Posterior vena cava (tissue), 2 donors: ENCODE measurements at regions of chr14 and their contacts with region 1.

Region 1: DNA sequence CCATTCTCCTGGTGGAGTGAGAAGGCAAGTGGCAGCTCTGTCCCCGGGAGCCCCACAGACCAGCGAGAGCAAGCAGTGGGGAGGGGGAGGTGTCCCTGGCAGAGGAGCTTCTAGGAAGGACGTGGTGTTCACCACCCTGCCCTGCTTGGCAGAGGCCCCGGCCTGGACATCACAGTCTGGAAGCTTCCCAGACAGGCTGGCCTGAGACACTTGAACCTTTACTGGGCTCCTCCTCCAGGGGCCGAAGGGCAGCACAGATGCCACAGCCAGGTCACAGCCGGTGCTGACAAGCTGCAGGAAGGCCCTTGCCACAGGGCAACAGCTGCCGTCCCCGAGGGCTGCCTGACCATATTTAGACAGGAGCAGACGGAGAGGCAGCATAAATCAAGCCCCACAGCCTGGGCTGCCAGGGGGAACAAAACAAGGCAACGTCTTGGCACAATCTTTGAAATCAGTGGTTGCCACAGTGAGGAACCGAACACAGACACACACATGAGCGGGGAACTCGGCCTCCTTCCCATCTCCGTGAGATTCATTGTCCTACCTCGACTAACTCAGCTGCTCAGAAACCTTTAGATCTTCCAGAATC is 28.5 kb downstream of the PRIMA1 start:
- DNase-seq: peak; percentile 86

Region 2: DNA sequence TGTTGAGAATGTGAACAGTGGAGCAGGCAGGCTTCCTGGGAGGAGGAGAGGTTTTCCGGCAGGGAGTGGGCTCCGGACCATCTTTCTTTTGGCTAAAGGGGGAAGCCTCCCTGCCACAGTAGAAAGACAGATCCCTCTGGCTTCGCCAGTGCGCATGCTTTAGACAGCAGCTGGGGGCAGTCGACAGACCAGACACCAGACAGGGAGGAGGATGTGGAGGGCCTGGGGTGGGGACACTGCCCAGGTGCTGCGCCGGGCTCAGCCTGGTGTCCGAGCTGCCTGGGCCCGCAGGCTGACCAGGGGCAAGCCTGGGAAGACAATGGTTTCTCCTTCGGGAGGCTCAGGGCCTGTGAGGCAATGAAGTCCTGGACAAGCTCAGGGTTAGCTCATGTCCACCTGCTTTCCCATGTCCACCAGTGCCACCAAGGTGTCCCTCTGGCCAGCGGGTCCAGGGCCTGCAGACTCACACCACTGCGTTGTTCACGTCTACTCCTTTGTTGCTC is 38.8 kb before region 1 on chr14:
- intact Hi-C with region 1: loop called in 1 of 2 experiments (anchors 1 kb)
- DNase-seq: peak; percentile 66

Region 3: GRCh38 chr14:94945615-94946014 is 1185.8 kb after region 1 on chr14:
- intact Hi-C with region 1: no loop called
- DNase-seq: no peak